ENCODE measurements at regions of chr21 and their contacts with region 1.

Region 1: GRCh38 chr21:37711836-37712568 is 204.3 kb downstream of the KCNJ6 start:
- DNase-seq: peak in 1 of 2 donors; percentile 81
- H3K4me3 ChIP-seq: no peak overlapping the region
- H3K27ac ChIP-seq: peak overlapping the region; percentile 54 to 74
- H3K4me1 ChIP-seq: peaks cover 0 to 4% of the 10 kb centered on the region in 2 donors
- H3K27me3 ChIP-seq: no peaks in the 10 kb centered on the region
- CTCF ChIP-seq: peak; percentile 74 to 89 (median 74)

Region 2: DNA sequence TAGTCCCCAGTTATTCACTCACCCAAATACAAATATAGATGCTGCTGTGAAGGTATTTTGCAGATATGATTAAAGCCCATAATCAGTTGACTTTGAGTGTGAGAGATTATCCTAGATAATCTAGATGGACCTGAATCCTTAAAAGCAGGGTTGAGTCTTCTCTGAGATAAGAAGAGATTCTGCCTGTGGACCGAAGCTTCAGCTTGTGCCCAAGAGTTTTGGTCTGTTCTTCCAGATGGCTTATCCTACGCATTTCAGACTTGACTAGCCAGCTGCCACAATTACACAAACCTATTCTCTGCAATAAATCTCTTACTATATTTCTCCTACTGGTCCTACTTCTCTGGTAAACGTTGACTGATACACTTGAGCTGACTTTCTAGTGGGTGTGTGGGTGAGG is 59.2 kb after region 1 on chr21:
- intact Hi-C with region 1: no loop called
- DNase-seq: no peak
- H3K4me3 ChIP-seq: no peak overlapping the region
- H3K27ac ChIP-seq: no peak overlapping the region
- H3K4me1 ChIP-seq: no peaks in the 10 kb centered on the region
- H3K27me3 ChIP-seq: no peaks in the 10 kb centered on the region
- CTCF ChIP-seq: no peak

Region 3: GRCh38 chr21:37916310-37917051 is 204.5 kb after region 1 on chr21 and contains the start of gene KCNJ6:
- intact Hi-C with region 1: loop called (anchors 2 kb)
- DNase-seq: no peak
- H3K4me3 ChIP-seq: peak within 1 kb of the TSS; percentile 31 to 56
- H3K27ac ChIP-seq: no peak within 1 kb of the TSS
- H3K4me1 ChIP-seq: peaks cover 6 to 14% of the 10 kb centered on the region in 2 donors
- H3K27me3 ChIP-seq: peaks cover 28% of the 10 kb centered on the region
- CTCF ChIP-seq: peak; percentile 18 to 42 (median 27)
- total RNA-seq, gene KCNJ6: 0.64 TPM

Region 4: GRCh38 chr21:38075831-38076587 is 364.0 kb after region 1 on chr21:
- intact Hi-C with region 1: loop called (anchors 5 kb)
- DNase-seq: no peak
- H3K4me3 ChIP-seq: no peak overlapping the region
- H3K27ac ChIP-seq: no peak overlapping the region
- H3K4me1 ChIP-seq: peaks cover 0 to 6% of the 10 kb centered on the region in 2 donors
- H3K27me3 ChIP-seq: no peaks in the 10 kb centered on the region
- CTCF ChIP-seq: no peak

Region 5: DNA sequence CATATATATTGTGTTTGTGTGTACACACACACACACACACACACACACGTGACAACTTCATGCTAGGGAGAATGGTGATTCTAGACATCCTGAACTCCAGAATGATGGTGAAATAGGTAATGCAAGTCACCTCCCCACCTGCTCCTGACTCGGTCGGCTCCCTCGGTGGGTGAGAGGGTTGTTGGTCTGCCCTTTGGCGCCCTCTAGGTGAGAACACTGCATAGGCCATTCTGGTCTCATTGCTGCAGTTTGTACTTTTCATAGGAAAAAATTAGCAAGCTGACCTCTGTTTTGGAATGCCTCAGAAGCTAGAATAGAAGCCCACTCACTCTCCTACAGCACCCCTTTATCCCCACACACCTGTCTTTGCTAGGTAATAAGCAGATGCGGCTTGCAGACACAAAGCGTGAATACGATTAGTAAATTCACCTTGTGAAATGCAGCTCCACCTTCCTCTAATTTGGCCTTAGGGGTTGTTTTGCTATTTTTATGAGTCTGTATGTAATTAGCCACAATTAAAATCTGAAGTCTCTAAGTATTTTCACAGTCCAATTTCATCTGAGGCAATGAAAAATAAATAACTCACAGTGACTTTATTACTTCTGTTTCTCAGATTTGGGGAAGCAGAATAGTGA is 414.8 kb after region 1 on chr21:
- intact Hi-C with region 1: loop called (anchors 2 kb)
- DNase-seq: peak in 1 of 2 donors; percentile 72
- H3K4me3 ChIP-seq: no peak overlapping the region
- H3K27ac ChIP-seq: no peak overlapping the region
- H3K4me1 ChIP-seq: no peaks in the 10 kb centered on the region
- H3K27me3 ChIP-seq: no peaks in the 10 kb centered on the region
- CTCF ChIP-seq: peak; percentile 56 to 70 (median 58)

Region 6: DNA sequence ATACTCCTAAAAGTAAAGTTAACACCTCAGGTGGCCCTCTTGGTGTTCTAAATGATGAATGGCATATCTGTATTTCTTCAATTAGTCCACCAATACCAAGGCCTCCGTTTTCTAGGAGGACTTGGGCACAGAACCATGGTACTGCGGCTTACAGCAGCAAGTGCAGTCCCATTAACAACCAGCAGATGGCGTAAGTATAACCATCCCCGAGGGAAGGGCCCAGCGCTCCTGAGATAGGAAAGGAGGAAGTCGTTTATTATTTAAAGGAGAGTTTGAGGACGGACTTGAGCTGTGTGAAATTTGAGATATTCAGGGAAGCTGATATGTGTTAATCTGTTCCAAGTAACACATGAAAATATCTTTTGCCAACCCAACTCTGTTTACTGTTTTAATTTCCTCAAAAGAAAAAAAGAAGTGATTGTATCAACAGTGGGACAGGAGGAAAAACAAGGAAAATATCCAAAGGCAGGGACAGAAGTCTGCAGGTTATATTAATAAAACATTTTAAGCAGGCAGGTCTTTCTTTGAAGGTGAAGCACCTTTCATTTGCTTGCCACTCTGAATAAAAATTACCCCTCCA is 507.1 kb after region 1 on chr21:
- intact Hi-C with region 1: loop called (anchors 10 kb)
- DNase-seq: peak in 1 of 2 donors; percentile 85
- H3K4me3 ChIP-seq: no peak overlapping the region
- H3K27ac ChIP-seq: peak overlapping the region; percentile 52 to 57
- H3K4me1 ChIP-seq: peaks cover 2 to 9% of the 10 kb centered on the region in 2 donors
- H3K27me3 ChIP-seq: no peaks in the 10 kb centered on the region
- CTCF ChIP-seq: peak; percentile 89 to 96 (median 96)